Mammary epithelial cell (primary cell): ENCODE measurements at regions of chr18 and their contacts with region 1.

Region 1: DNA sequence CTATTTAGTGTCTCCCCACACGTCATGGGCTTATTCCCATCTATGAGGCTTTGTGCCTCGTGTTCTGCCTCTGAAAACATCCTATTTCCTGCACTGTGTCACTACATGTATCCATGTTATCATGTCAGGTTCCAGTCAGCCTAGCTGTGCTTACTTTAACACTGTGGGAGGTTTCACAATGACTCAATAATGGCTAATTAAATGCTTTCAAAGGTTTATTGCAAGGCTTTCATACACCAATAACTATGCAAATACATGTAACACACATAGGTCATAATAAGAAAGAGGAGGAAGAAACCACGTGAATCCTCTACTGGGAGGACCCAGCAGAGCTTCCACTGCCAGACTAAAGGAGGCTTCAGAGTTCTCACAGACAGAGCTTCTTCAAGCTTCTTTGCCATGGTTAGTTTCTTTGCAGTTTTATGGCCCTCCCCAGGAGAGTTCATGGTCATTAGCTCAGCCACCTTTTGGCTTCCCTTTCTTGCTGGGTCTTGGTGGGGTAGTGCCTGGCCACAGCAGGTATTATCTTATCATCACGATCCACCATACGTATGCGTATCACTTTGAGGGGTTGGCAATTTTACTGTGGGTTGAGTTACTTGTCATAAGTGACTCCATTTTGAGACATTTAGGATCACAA is 5.1 kb upstream of the COLEC12 start:
- DNase-seq: no peak
- H3K4me3 ChIP-seq: no peak overlapping the region
- H3K27ac ChIP-seq: no peak overlapping the region
- H3K4me1 ChIP-seq: no peaks in the 10 kb centered on the region
- H3K27me3 ChIP-seq: peaks cover 10% of the 10 kb centered on the region
- CTCF ChIP-seq: no peak

Region 2: DNA sequence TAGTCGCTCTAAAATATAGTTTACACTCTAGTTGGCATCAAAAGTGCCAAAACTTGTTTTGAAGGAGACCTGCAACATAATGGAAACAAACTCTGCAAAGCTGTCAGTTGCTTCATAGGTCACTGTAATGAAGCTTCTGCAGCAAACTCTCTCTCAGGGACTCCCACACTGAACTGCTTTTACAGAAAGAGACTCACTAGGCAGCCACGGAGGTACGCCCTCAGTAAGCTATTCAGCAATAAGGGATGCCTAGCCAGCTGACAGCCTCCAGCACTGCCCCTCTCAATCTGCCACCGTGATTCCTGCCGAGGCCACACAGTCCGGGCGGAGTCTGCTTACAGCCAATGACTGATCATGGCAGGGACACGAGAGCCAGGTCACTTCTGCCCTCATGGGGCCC is 56.2 kb before region 1 on chr18:
- CTCF ChIA-PET with region 1: no interaction called
- dilution Hi-C with region 1: loop called (anchors 5 kb)
- in situ Hi-C with region 1: no loop called
- intact Hi-C with region 1: no loop called
- DNase-seq: no peak
- H3K4me3 ChIP-seq: no peak overlapping the region
- H3K27ac ChIP-seq: no peak overlapping the region
- H3K4me1 ChIP-seq: no peaks in the 10 kb centered on the region
- H3K27me3 ChIP-seq: no peaks in the 10 kb centered on the region
- CTCF ChIP-seq: no peak

Region 3: GRCh38 chr18:634551-635045 is 129.0 kb after region 1 on chr18:
- CTCF ChIA-PET with region 1: no interaction called
- dilution Hi-C with region 1: no loop called
- in situ Hi-C with region 1: no loop called
- intact Hi-C with region 1: no loop called
- DNase-seq: peak; percentile 39
- H3K4me3 ChIP-seq: no peak overlapping the region
- H3K27ac ChIP-seq: no peak overlapping the region
- H3K4me1 ChIP-seq: peaks cover 8% of the 10 kb centered on the region
- H3K27me3 ChIP-seq: no peaks in the 10 kb centered on the region
- CTCF ChIP-seq: no peak